ENCODE measurements at regions of chr3 and their contacts with region 1.

Region 1: DNA sequence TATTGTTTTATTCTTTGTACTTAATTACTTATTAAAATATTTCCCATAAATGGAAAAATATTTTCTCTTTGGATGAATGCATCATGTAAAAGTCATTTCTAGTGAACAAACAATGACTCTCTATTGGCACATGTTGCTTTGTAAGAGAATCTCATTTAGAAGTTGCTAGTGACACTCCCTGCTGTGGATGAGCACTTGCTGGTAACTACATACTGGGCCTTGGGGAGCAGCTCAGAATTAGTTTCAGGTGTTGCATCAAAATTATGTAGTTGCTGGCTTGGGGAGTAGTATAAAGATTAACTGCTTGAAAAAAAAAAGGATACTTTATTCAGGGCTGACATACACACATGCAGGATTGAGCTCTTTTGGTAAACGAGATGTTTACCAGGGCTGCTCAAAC is 80.3 kb upstream of the KCNAB1 start:
- DNase-seq: no peak
- ATAC-seq: no peak
- H3K4me3 ChIP-seq: no peak overlapping the region
- H3K4me3 Mint-ChIP-seq: no peak overlapping the region
- H3K27ac ChIP-seq: no peak overlapping the region
- H3K27ac Mint-ChIP-seq: no peak overlapping the region
- H3K4me1 ChIP-seq: no peaks in the 10 kb centered on the region
- H3K4me1 Mint-ChIP-seq: no peaks in the 10 kb centered on the region
- H3K27me3 ChIP-seq: no peaks in the 10 kb centered on the region
- H3K27me3 Mint-ChIP-seq: peaks cover 3% of the 10 kb centered on the region
- CTCF ChIP-seq: no peak

Region 2: DNA sequence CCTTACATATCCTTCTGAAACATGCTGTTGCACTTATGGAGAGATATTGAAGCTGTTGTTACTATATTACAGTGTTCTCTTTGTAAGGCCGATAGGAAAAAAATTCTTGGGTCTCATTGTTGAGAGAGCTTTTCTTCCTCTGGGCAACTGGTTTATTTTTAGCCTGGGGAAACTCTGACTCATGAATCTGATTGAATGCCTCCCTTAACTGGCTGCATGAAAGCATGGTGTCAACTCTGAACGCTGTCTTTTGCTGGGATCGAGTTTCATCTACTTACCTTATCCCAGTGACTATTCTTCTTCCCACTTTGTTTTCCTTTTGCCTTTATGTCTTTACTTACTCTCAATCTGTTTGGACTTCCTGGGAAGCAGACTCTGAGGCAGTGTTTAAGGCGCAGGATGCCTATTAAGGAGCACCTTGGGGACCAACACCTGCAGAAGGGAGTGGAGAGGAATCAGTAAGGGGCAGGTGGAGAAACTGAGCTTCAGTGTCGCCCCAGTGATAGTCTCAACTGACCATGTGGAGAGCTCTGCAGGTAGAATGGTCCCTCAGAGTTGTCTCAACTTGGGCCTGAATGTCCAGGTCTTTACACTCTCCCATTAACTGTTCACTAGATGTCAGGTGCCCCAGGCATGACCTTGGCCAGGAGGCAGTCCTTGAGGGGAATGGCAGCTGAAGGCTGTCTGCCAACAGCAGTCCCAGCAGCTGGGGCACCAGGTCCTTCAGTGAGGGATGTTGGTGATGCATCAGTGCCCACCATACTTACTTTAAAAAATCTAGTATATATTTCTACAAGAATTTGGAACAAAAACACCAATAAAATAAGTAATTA is 1208.8 kb after region 1 on chr3:
- CTCF ChIA-PET with region 1: no interaction called
- POLR2A ChIA-PET with region 1: no interaction called
- intact Hi-C with region 1: loop called in 1 of 2 experiments (anchors 10 kb)
- DNase-seq: no peak
- ATAC-seq: no peak
- H3K4me3 ChIP-seq: no peak overlapping the region
- H3K4me3 Mint-ChIP-seq: no peak overlapping the region
- H3K27ac ChIP-seq: no peak overlapping the region
- H3K27ac Mint-ChIP-seq: no peak overlapping the region
- H3K4me1 ChIP-seq: no peaks in the 10 kb centered on the region
- H3K4me1 Mint-ChIP-seq: peaks cover 8% of the 10 kb centered on the region
- H3K27me3 ChIP-seq: no peaks in the 10 kb centered on the region
- H3K27me3 Mint-ChIP-seq: no peaks in the 10 kb centered on the region
- CTCF ChIP-seq: no peak